ENCODE measurements at regions of chr1 and their contacts with region 1.

Region 1: DNA sequence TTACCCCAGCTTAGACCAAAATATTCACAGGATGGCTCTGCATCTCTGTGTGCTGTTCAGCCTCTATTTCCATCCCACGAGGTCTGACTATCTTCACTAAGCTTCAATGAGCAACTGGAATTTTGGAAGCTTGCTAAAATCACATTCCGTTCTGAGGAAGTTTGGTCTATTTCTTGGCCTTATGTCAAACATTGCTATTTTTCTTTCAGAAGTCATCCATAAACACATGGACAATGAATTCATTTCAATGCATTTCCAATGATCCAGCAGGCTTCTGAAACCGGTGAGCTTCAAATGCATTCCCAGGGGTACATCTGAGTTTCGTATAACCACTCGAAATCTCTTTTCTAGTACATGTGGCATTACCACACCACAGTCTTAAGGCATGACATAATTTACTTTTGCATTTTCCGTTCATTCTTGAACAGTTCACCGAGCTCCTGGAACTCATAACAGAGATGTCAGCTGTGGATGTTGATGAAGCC is 294.1 kb upstream of the KAZN start:
- DNase-seq: no peak
- H3K4me3 ChIP-seq: no peak overlapping the region
- H3K27ac ChIP-seq: no peak overlapping the region
- H3K4me1 ChIP-seq: no peaks in the 10 kb centered on the region
- H3K27me3 ChIP-seq: no peaks in the 10 kb centered on the region
- CTCF ChIP-seq: no peak
- POLR2A ChIP-seq: no peak

Region 2: DNA sequence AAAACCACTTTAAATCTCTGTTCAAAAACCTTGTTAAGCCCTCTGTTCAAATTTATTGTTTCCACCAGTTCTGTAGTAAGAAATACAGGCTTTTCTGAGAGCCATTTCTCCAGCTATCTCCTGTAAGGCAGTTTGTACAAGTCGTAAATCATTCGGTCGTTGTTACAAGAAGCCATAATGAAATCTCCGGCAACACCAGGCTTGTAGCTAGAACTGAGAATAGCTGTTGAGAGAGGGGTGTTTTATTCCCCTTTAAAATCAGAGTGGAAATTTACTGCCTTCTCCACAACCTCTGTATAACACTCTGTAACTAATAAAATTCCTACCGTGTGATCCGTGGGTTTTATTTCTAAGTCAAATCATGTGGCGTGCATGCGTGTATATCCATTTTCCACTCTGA is 41.8 kb before region 1 on chr1:
- intact Hi-C with region 1: loop called (anchors 5 kb)
- DNase-seq: no peak
- H3K4me3 ChIP-seq: no peak overlapping the region
- H3K27ac ChIP-seq: no peak overlapping the region
- H3K4me1 ChIP-seq: no peaks in the 10 kb centered on the region
- H3K27me3 ChIP-seq: no peaks in the 10 kb centered on the region
- CTCF ChIP-seq: no peak
- POLR2A ChIP-seq: no peak